Left cardiac atrium (tissue), 4 donors: ENCODE measurements at regions of chr17 and their contacts with region 1.

Region 1: DNA sequence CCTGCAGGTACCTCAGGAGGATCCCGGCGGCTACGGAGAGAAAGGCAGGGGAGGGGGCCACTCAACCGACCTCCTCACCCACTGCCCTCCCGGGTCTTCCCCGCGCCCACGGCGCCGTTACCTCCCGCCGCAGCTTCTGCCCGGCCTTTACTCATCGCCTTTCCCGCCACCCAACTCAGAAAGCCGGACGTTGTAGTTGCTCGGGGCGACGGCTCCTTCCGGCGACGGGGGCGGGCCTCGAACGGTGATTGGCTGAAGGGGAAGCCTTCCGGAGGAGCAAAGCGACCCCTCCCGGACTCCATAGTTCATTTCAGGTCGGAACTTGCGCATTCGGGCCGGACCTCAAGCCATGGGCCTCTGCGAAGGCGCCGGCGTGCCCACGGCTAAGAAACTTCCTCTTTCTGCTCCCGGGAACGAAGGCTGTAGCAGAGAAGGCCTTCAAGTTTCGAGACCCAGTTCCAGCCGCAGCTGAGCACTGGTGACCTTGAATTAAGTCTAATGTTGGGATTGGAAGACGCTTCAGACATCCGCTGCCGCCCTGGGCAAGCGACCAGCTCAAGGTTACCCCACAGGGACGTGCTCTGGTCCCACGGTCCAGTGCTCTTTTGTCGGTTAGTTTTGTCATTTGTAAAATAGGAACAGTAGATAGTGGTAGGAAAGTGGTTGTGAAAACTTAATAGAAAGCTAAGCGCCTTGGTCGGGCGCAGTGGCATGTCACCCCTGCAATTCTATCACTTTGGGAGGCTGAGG is at the start of gene PSMC3IP:
- DNase-seq: peak; percentile 97
- ATAC-seq: peak; percentile 96
- total RNA-seq, gene PSMC3IP: 2.2 to 3.4 TPM

Region 2: GRCh38 chr17:42609182-42609813 is 31.6 kb after region 1 on chr17 and contains the starts of genes RETREG3 and TUBG1:
- intact Hi-C with region 1: loop called in 1 of 2 experiments (anchors 2 kb)
- DNase-seq: peak; percentile 99
- ATAC-seq: peak; percentile 97
- total RNA-seq, gene RETREG3: 26.0 to 26.1 TPM
- total RNA-seq, gene TUBG1: 45.3 to 54.8 TPM

Region 3: DNA sequence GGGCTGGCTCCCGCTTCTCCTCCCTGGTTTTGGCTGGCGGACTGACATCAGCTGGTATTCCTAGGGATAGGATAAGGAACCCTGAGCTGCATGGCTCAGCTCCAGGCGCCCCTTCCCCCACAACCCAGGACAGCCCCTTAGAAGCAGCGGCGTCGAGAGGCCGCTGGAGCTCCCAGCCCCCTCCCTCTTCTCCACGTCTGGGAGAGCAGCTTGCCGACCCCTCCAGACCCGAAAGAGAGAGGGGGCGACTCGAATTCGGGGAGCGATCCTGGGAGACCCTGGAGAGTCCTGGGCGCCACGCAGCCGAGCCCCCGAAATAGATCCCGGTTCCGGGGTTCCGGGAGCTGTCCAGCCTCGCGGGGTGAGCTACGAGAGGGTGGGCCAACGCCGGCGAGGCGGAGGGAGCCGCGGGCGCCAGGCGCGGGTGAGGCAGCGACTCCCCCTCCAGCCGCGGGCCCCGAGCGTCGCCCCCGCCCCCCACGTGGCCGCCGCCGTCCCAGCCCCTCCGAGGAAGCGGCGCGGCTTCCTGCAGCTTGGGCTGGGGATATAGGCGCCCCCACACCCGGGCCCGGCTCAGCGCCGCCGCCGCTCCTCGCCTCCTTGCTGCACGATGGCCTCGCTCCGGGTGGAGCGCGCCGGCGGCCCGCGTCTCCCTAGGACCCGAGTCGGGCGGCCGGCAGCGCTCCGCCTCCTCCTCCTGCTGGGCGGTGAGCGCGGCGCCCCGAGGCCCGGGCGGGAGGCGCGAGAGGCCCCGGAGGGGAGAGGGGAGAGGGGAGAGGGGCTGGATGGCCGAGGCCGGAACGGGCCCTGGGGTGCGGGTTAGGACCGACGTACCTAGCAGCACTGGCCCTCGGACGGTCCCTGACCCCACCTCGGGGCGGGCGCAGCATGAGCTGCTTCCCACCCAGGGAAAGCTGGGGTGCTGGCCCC is 183.2 kb after region 1 on chr17 and contains the start of gene RAMP2:
- intact Hi-C with region 1: loop called in 1 of 2 experiments (anchors 5 kb)
- DNase-seq: peak; percentile 46
- ATAC-seq: peak; percentile 62 to 71
- total RNA-seq, gene RAMP2: 40.9 to 49.7 TPM